HEK293 (cell line): ENCODE measurements at regions of chr7 and their contacts with region 1.

Region 1: DNA sequence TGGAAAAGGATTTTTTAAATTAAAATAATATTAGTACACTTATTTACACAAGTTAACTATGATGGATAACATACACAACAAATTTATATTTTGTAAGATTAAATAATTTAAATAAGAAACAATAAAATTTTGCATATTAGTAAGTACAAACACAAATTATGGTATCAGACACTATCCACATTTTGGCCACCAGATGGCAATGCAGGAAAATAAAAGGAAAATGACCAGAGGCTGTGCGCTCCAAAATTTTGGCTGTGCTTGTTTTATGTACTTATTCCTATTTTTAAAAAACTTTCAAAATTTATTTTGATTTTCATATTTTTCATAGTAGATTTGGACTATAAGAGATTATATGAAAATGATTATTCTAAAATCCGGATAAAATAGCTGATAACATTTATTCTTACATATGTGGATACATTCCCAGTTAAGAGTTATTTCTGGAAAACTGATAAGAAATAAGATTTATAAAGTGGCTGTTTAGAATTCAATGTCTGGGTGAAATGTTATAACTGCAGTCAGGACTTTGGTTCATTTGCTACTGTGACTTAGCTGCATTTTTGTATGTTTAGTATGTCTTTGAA is 274.7 kb upstream of the HGF start:
- H3K4me3 ChIP-seq: no peak overlapping the region
- H3K27ac ChIP-seq: no peak overlapping the region
- H3K4me1 ChIP-seq: peaks cover 7% of the 10 kb centered on the region
- CTCF ChIP-seq: no peak

Region 2: GRCh38 chr7:81527649-81528048 is 516.9 kb before region 1 on chr7:
- CTCF ChIA-PET with region 1: no interaction called
- POLR2A ChIA-PET with region 1: no interaction called
- H3K4me3 ChIP-seq: no peak overlapping the region
- H3K27ac ChIP-seq: no peak overlapping the region
- H3K4me1 ChIP-seq: no peaks in the 10 kb centered on the region
- CTCF ChIP-seq: no peak

Region 3: DNA sequence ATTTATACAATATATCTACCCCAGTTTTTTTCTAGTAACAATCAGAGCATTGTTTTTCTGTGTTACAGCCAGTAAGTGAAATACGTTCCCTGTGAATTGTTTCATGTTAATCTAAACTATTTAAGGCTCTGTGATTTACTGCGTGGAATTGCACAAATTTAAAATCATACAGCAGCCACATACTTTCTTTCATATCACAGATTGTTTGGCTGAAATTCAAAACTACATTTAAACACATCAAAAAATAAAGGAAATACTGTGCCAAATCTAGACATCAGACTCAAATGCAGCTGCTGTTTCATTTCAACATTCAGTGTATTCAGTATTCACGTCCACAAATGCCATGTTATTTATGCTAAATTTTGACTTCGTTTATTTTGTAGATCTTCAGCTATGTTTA is 32.1 kb before region 1 on chr7:
- CTCF ChIA-PET with region 1: no interaction called
- POLR2A ChIA-PET with region 1: no interaction called
- H3K4me3 ChIP-seq: no peak overlapping the region
- H3K27ac ChIP-seq: no peak overlapping the region
- H3K4me1 ChIP-seq: no peaks in the 10 kb centered on the region
- CTCF ChIP-seq: no peak

Region 4: DNA sequence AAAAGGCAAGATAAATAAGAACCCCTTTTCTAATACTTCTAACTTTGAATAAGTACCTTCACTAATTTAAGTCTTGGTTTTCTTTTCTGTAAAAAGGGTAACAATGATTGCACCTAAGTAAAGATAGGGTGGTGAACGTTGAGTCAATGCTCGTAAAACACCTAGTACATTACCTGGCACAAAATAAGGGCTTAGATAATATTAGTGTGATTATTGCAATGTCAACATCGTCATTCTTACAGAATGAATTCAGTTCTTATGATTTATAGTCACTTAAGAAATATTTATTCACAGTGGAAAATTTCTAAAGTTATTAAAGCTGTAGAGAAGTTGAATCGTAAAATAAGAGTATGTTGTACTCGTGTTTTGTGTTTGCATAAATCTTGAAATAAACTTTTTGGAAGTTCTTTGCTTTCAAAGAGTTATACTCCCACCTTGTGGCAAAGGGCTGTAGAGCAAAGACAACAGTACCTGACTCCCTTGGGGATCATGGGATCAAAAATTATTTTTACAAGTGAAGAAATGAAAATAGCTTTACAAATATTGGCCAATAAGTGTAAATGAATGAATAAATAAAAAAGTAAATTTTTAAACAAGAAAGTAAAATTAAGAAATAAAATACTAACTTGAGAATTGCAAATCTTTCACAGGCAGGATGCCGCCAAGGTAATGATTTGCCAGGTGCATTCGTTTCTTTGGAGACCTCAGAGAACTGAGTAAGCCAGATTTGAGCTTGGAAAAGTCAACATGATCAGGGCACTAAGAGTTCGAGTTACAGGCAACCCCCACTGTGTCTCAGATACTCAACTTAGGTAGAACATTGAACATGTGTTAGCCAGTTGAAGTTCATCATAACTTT is 684.8 kb after region 1 on chr7:
- CTCF ChIA-PET with region 1: interaction called, 10 read pairs
- POLR2A ChIA-PET with region 1: no interaction called
- H3K4me3 ChIP-seq: no peak overlapping the region
- H3K27ac ChIP-seq: no peak overlapping the region
- H3K4me1 ChIP-seq: peaks cover 7% of the 10 kb centered on the region; the same call in 1 of the 2 replicates
- CTCF ChIP-seq: peak; percentile 24; the same call in 1 of the 2 replicates